Caco-2 (cell line): ENCODE measurements at regions of chr17 and their contacts with region 1.

Region 1: GRCh38 chr17:56819431-56820145 is 14.1 kb downstream of the C17orf67 start:
- DNase-seq: peak; percentile 81 to 90
- H3K4me3 ChIP-seq: no peak overlapping the region
- H3K4me3 Mint-ChIP-seq: no peak overlapping the region
- H3K27ac Mint-ChIP-seq: no peak overlapping the region
- H3K4me1 ChIP-seq: peaks cover 4% of the 10 kb centered on the region; the same call in 1 of the 2 replicates
- H3K4me1 Mint-ChIP-seq: peaks cover 6% of the 10 kb centered on the region
- H3K27me3 ChIP-seq: no peaks in the 10 kb centered on the region; the same call in 1 of the 2 replicates
- H3K27me3 Mint-ChIP-seq: peaks cover 3% of the 10 kb centered on the region
- CTCF ChIP-seq: peak; percentile 75 to 90

Region 2: DNA sequence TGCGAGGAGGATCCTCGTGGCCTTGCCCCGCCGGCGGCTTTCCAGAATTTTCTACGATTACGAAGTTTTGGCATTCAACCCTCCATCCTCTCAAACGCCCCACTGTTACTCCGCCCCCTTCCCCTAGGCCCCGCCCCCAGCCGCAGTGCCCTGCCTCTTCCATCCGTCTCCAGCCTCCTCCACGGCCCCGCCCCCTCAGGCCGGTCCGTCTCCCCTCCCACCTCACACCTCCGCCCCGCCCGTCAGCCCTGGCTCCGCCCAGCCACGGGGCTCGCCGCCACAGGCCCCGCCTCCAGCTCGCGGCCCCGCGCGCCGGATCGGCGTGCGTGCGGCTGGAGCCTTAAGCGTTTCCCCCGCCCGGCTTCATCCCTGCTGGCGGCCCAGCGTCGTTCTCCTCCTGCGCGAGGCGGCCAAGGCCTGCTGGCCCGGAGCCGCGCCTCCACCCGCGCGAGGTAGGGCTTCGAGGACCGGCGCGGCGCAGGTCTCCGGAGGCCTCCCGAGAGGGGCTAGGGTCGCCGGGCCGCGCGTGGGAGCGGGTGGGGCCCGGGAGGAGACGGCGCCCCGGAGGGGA is 14.3 kb after region 1 on chr17 and contains the starts of genes C17orf67 and DGKE:
- CTCF ChIA-PET with region 1: interaction called, 37 read pairs
- POLR2A ChIA-PET with region 1: no interaction called
- intact Hi-C with region 1: loop called (anchors 1 kb)
- DNase-seq: peak; percentile 98 to 99
- H3K4me3 ChIP-seq: peak within 1 kb of the TSS; percentile 79
- H3K4me3 Mint-ChIP-seq: peak within 1 kb of the TSS; percentile 84
- H3K27ac Mint-ChIP-seq: peak within 1 kb of the TSS; percentile 75
- H3K4me1 ChIP-seq: peaks cover 6% of the 10 kb centered on the region
- H3K4me1 Mint-ChIP-seq: peaks cover 34% of the 10 kb centered on the region
- H3K27me3 ChIP-seq: no peaks in the 10 kb centered on the region
- H3K27me3 Mint-ChIP-seq: no peaks in the 10 kb centered on the region
- CTCF ChIP-seq: no peak
- total RNA-seq, gene C17orf67: 2.9 and 4.6 TPM in 2 replicates
- total RNA-seq, gene DGKE: 15.5 and 17.6 TPM in 2 replicates

Region 3: GRCh38 chr17:56866496-56866895 is 46.9 kb after region 1 on chr17:
- CTCF ChIA-PET with region 1: no interaction called
- POLR2A ChIA-PET with region 1: no interaction called
- intact Hi-C with region 1: loop called (anchors 1 kb)
- DNase-seq: no peak
- H3K4me3 ChIP-seq: no peak overlapping the region
- H3K4me3 Mint-ChIP-seq: no peak overlapping the region
- H3K27ac Mint-ChIP-seq: no peak overlapping the region
- H3K4me1 ChIP-seq: 0 out of 2 replicates have a peak, but pooled peaks cover 6% of the 10 kb centered on the region
- H3K4me1 Mint-ChIP-seq: no peaks in the 10 kb centered on the region
- H3K27me3 ChIP-seq: no peaks in the 10 kb centered on the region
- H3K27me3 Mint-ChIP-seq: no peaks in the 10 kb centered on the region
- CTCF ChIP-seq: peak in 1 of 2 experiments; percentile 17

Region 4: DNA sequence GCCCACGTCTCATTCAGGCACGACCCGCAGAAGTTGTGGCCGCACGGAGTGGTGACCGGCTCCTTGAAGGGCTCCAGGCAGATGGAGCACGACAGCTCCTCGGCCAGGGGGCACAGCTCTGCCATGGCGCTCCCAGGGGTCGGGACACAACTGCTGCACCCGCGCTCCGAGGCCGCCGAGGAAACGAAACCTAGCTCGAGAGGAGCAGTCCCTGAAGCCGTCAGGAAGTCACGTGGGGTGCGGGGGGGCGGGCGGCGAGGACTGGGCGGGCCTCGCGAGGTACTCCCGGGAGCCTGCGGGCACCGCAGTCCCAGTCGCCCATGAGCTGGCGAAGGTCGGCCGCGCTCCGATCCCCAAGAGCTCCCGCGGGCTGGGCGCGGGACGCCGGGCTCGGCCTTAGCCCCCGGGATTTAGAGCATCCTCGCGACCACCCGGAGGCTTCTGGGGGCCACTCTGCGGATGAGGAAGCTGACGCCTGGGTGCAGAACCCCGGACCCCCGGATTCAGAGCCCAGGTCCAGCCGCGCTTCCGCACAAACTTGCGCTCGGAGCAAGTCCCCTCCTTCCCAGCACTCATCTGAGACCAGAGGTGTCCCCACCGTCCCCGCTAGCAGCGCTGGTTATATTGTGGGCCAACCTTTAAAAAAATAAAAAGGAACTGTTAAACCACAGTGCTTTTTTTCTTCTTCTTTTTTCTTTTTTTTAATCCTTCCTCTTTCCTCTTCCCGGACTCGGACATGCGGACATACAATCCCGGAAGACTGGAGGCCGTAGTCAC is 94.5 kb after region 1 on chr17 and contains the start of gene TRIM25:
- CTCF ChIA-PET with region 1: interaction called, 13 read pairs
- POLR2A ChIA-PET with region 1: interaction called, 10 read pairs
- intact Hi-C with region 1: no loop called
- DNase-seq: peak; percentile 86 to 95
- H3K4me3 ChIP-seq: peak within 1 kb of the TSS; percentile 90
- H3K4me3 Mint-ChIP-seq: peak within 1 kb of the TSS; percentile 98
- H3K27ac Mint-ChIP-seq: peak within 1 kb of the TSS; percentile 94
- H3K4me1 ChIP-seq: peaks cover 25% of the 10 kb centered on the region
- H3K4me1 Mint-ChIP-seq: peaks cover 30% of the 10 kb centered on the region
- H3K27me3 ChIP-seq: no peaks in the 10 kb centered on the region
- H3K27me3 Mint-ChIP-seq: no peaks in the 10 kb centered on the region
- CTCF ChIP-seq: no peak
- total RNA-seq, gene TRIM25: 85.6 and 89.4 TPM in 2 replicates

Region 5: DNA sequence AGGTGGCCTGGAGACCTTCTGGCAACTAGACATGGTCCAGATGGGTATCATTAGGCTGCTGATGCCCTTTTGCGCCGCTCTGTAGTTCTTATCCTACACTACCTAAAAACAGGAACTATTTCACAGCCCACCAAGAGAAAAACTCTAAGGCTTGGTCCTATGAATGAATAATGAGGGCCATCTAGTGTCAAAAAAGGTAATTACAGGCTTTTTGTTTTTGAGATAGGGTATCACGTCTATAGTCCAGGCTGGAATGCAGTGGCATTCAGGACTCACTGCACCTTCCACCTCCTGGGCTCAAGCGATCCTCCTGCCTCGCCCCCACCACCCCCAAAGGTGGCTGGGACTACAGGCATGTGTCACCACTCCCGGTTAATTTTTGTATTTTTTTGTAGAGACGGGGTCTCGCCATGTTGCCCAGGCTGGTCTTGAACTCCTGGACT is 120.3 kb after region 1 on chr17:
- CTCF ChIA-PET with region 1: interaction called, 8 read pairs
- POLR2A ChIA-PET with region 1: interaction called, 3 read pairs
- intact Hi-C with region 1: loop called (anchors 1 kb)
- DNase-seq: peak in 1 of 2 experiments; percentile 76
- H3K4me3 ChIP-seq: no peak overlapping the region
- H3K4me3 Mint-ChIP-seq: no peak overlapping the region
- H3K27ac Mint-ChIP-seq: no peak overlapping the region
- H3K4me1 ChIP-seq: no peaks in the 10 kb centered on the region
- H3K4me1 Mint-ChIP-seq: peaks cover 6% of the 10 kb centered on the region
- H3K27me3 ChIP-seq: no peaks in the 10 kb centered on the region
- H3K27me3 Mint-ChIP-seq: no peaks in the 10 kb centered on the region
- CTCF ChIP-seq: peak; percentile 62 to 84

Region 6: DNA sequence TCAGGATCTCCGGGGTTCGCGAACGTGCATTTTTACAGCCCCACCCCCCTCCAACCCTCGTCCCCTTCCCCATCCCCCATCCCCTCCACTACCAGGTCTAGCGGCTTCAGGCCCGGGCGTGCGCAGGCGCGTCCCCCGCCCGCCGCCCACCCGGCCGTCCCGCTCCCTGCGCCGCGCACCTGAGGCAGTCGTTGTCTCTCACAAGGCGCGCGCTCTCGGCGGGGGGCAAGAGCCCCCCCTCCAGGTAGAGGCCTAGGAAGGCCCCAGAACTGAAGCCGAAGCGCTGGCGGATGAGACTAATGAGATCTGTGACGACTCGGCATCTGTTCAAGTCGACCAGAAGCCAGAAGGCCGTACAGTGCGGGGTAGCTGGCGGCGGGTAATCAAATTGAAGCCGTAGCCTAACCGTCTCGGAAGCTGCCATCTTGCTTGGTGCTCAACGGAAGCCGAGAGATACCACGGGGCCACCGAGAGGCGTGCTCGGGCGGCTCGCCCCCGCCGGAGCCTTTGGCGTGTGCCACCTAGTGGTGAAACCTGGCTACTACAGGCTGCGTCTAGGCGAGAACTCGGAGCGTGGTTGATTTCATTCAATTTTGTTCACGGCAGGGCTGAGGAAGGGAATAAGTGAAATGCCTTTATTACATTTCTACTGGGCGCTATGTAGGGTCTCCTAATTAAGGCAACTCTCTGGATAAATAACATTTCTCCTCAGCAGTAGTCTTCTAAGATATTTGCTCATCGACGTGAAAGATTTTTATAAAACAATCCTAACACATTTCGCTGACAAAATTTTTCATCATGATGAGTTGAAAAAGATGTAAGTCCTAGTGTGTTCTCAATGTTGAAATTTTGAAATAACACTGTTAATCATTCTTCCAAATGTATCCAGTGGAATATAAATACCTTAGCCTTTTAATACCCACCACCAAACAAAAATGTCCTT is 141.3 kb after region 1 on chr17 and contains the start of gene COIL:
- CTCF ChIA-PET with region 1: interaction called, 4 read pairs
- POLR2A ChIA-PET with region 1: no interaction called
- intact Hi-C with region 1: loop called (anchors 1 kb)
- DNase-seq: peak; percentile 94 to 96
- H3K4me3 ChIP-seq: peak within 1 kb of the TSS; percentile 67
- H3K4me3 Mint-ChIP-seq: peak within 1 kb of the TSS; percentile 77
- H3K27ac Mint-ChIP-seq: peak within 1 kb of the TSS; percentile 86
- H3K4me1 ChIP-seq: peaks cover 26% of the 10 kb centered on the region
- H3K4me1 Mint-ChIP-seq: peaks cover 12% of the 10 kb centered on the region
- H3K27me3 ChIP-seq: no peaks in the 10 kb centered on the region
- H3K27me3 Mint-ChIP-seq: no peaks in the 10 kb centered on the region
- CTCF ChIP-seq: peak; percentile 98
- total RNA-seq, gene COIL: 26.9 and 27.0 TPM in 2 replicates

Region 7: DNA sequence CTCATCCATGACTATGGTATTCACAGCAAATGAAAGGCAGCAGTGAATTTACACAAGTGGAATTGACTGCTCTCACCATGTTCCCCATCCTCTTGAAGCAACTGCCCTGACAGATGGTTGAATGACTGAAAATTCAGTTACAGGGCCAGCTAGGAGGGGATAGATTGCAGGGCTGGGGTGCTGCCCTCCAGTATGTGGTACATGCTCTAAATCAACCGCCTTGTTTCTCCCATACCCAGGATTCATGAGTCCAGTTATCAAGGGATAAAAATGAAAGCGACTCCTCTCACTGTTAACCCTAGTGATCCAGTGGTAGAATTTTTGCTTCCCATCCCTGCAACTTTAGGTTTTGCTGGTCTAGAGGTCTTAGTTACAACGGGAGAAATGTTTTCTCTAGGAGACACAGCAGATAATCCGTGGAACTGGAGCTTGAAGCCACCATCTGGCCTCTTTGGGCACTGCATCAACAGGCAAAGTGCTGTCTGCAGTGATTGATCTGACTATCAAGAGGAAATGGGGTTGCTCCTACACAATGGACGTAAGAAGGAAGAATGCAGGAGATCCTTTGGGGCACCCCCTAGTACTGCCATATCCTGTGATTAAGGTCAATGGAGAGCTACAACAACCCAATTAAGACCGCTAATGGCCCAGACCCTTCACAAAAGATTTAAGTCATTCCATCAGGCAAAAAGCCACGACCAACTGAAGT is 190.3 kb after region 1 on chr17:
- CTCF ChIA-PET with region 1: interaction called, 4 read pairs
- POLR2A ChIA-PET with region 1: no interaction called
- intact Hi-C with region 1: loop called (anchors 1 kb)
- DNase-seq: peak; percentile 65 to 69
- H3K4me3 ChIP-seq: no peak overlapping the region
- H3K4me3 Mint-ChIP-seq: no peak overlapping the region
- H3K27ac Mint-ChIP-seq: no peak overlapping the region
- H3K4me1 ChIP-seq: no peaks in the 10 kb centered on the region
- H3K4me1 Mint-ChIP-seq: peaks cover 7% of the 10 kb centered on the region
- H3K27me3 ChIP-seq: no peaks in the 10 kb centered on the region
- H3K27me3 Mint-ChIP-seq: no peaks in the 10 kb centered on the region
- CTCF ChIP-seq: peak; percentile 77 to 86